Activated CD4-positive, alpha-beta memory T cell treated with anti-CD3 and anti-CD28 coated beads for 36 hours (primary cell): ENCODE measurements at regions of chr12 and their contacts with region 1.

Region 1: GRCh38 chr12:53561590-53561953 is 54.3 kb upstream of the NPFF start:
- DNase-seq: no peak
- H3K4me3 Mint-ChIP-seq: no peak overlapping the region
- H3K27ac Mint-ChIP-seq: peak overlapping the region; percentile 75
- H3K4me1 Mint-ChIP-seq: peaks cover 54% of the 10 kb centered on the region
- H3K27me3 Mint-ChIP-seq: no peaks in the 10 kb centered on the region

Region 2: GRCh38 chr12:53575502-53576253 is 14.1 kb after region 1 on chr12:
- CTCF ChIA-PET with region 1: no interaction called
- POLR2A ChIA-PET with region 1: interaction called, 4 read pairs
- intact Hi-C with region 1: loop called (anchors 1 kb)
- DNase-seq: peak; percentile 18
- H3K4me3 Mint-ChIP-seq: no peak overlapping the region
- H3K27ac Mint-ChIP-seq: no peak overlapping the region
- H3K4me1 Mint-ChIP-seq: peaks cover 41% of the 10 kb centered on the region
- H3K27me3 Mint-ChIP-seq: no peaks in the 10 kb centered on the region

Region 3: GRCh38 chr12:53625946-53626701 is 64.6 kb after region 1 on chr12 and contains the start of gene ATF7:
- CTCF ChIA-PET with region 1: no interaction called
- POLR2A ChIA-PET with region 1: no interaction called
- intact Hi-C with region 1: loop called (anchors 2 kb)
- DNase-seq: peak; percentile 99
- H3K4me3 Mint-ChIP-seq: peak within 1 kb of the TSS; percentile 97
- H3K27ac Mint-ChIP-seq: peak within 1 kb of the TSS; percentile 94
- H3K4me1 Mint-ChIP-seq: peaks cover 43% of the 10 kb centered on the region
- H3K27me3 Mint-ChIP-seq: no peaks in the 10 kb centered on the region
- total RNA-seq, gene ATF7: 19.3 to 20.7 TPM